Naive thymus-derived CD8-positive, alpha-beta T cell (primary cell): ENCODE measurements at regions of chr6 and their contacts with region 1.

Region 1: GRCh38 chr6:110873981-110874879 is at the start of gene AMD1:
- DNase-seq: peak; percentile 86 to 98 (median 96)
- ATAC-seq: peak; percentile 70 to 76
- H3K4me3 Mint-ChIP-seq: peak within 1 kb of the TSS; percentile 92 to 100 (median 99)
- H3K27ac Mint-ChIP-seq: peak within 1 kb of the TSS; percentile 97 to 100 (median 99)
- H3K4me1 Mint-ChIP-seq: peaks cover 13 to 33% (median 29%) of the 10 kb centered on the region in 4 donors
- H3K27me3 Mint-ChIP-seq: no peaks in the 10 kb centered on the region
- polyA plus RNA-seq, gene AMD1: 35.9 to 45.6 (median 44.7) TPM

Region 2: DNA sequence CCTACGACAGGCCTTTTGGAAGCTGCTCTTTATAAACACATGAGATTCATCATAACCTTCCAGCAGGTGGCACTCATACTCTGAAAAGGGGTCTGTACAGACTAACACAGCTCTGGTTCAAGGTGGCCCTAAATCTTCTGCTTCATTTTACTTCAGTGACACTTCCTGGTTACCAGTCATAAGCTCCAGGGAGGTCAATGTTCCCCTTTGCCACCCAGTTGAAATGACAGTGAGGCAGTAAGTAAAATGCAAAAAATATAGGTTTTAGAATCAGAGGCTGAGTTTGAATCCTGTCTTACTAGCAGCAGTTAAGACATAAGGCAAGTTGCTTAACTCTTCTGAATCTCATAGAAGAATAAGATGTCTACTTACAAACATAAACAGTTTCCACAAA is 191.8 kb before region 1 on chr6:
- POLR2A ChIA-PET with region 1: interaction called, 17 read pairs
- DNase-seq: peak in 9 of 10 donors; percentile 48 to 87 (median 73)
- ATAC-seq: peak; percentile 99
- H3K4me3 Mint-ChIP-seq: no peak overlapping the region
- H3K27ac Mint-ChIP-seq: peak overlapping the region in 5 of 10 donors; percentile 49 to 78 (median 61)
- H3K4me1 Mint-ChIP-seq: peaks cover 3 to 24% (median 12%) of the 10 kb centered on the region in 4 donors
- H3K27me3 Mint-ChIP-seq: no peaks in the 10 kb centered on the region

Region 3: GRCh38 chr6:110688661-110689268 is 185.5 kb before region 1 on chr6:
- POLR2A ChIA-PET with region 1: interaction called, 17 read pairs
- DNase-seq: peak in 1 of 10 donors; percentile 3
- ATAC-seq: peak; percentile 52 to 53
- H3K4me3 Mint-ChIP-seq: peak overlapping the region in 4 of 10 donors; percentile 19 to 41 (median 29)
- H3K27ac Mint-ChIP-seq: peak overlapping the region; percentile 24 to 90 (median 70)
- H3K4me1 Mint-ChIP-seq: peaks cover 13 to 44% (median 29%) of the 10 kb centered on the region in 4 donors
- H3K27me3 Mint-ChIP-seq: no peaks in the 10 kb centered on the region

Region 4: GRCh38 chr6:110746680-110747079 is 127.5 kb before region 1 on chr6:
- POLR2A ChIA-PET with region 1: no interaction called
- DNase-seq: no peak
- ATAC-seq: no peak
- H3K4me3 Mint-ChIP-seq: no peak overlapping the region
- H3K27ac Mint-ChIP-seq: peak overlapping the region in 1 of 10 donors; percentile 16
- H3K4me1 Mint-ChIP-seq: peaks cover 0 to 13% (median 7%) of the 10 kb centered on the region in 4 donors
- H3K27me3 Mint-ChIP-seq: no peaks in the 10 kb centered on the region

Region 5: DNA sequence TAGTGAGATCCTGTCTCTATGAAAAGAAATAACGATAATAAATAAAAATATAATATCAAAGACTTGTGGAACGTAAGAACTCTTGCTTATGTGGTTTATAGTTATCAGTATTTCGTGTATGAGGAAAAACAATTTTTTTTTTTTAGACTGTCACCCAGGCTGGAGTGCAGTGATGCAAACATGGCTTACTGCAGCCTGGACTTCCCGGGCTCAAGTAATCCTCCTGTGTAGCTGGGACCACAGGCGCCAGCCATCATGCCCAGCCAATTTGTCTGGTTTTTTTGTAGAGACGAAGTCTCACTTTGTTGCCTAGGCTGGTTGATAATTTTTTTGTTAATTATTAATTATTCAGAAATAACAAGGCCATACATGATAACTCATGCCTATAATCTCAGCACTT is 40.4 kb before region 1 on chr6:
- POLR2A ChIA-PET with region 1: no interaction called
- DNase-seq: no peak
- ATAC-seq: no peak
- H3K4me3 Mint-ChIP-seq: no peak overlapping the region
- H3K27ac Mint-ChIP-seq: no peak overlapping the region
- H3K4me1 Mint-ChIP-seq: no peaks in the 10 kb centered on the region
- H3K27me3 Mint-ChIP-seq: no peaks in the 10 kb centered on the region

Region 6: DNA sequence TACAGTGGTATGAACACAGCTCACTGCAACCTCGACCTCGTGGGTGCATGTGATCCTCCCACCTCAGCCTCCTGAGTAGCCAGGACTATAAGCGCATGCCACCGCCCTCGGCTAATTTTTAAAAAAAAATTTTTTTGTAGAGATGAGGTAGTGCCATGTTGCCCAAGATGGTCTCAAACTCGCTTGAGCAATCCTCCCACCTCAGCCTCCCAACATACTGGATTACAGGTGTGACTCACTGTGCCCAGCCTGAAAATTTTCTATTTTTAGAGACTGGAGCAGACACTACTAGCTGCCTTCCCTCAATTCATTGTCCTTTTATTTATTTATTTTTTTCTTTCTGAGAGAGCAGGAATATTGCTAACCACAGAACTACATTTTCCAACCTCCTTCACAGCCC is 63.9 kb after region 1 on chr6:
- POLR2A ChIA-PET with region 1: no interaction called
- DNase-seq: no peak
- ATAC-seq: no peak
- H3K4me3 Mint-ChIP-seq: no peak overlapping the region
- H3K27ac Mint-ChIP-seq: no peak overlapping the region
- H3K4me1 Mint-ChIP-seq: peaks cover 0 to 6% (median 0%) of the 10 kb centered on the region in 4 donors
- H3K27me3 Mint-ChIP-seq: no peaks in the 10 kb centered on the region

Region 7: GRCh38 chr6:110958329-110959192 is 84.3 kb after region 1 on chr6 and contains the start of gene GTF3C6:
- POLR2A ChIA-PET with region 1: interaction called, 87 read pairs
- DNase-seq: peak; percentile 84 to 95 (median 90)
- ATAC-seq: peak; percentile 99
- H3K4me3 Mint-ChIP-seq: peak within 1 kb of the TSS; percentile 96 to 99 (median 98)
- H3K27ac Mint-ChIP-seq: peak within 1 kb of the TSS; percentile 97 to 100 (median 98)
- H3K4me1 Mint-ChIP-seq: peaks cover 9 to 24% (median 20%) of the 10 kb centered on the region in 4 donors
- H3K27me3 Mint-ChIP-seq: peaks cover 0 to 4% (median 3%) of the 10 kb centered on the region in 5 donors
- polyA plus RNA-seq, gene GTF3C6: 93.4 to 100 (median 98.5) TPM

Region 8: GRCh38 chr6:110981202-110981600 is 107.0 kb after region 1 on chr6:
- POLR2A ChIA-PET with region 1: interaction called, 20 read pairs
- DNase-seq: peak in 1 of 10 donors; percentile 32
- ATAC-seq: no peak
- H3K4me3 Mint-ChIP-seq: peak overlapping the region; percentile 93 to 99 (median 98)
- H3K27ac Mint-ChIP-seq: peak overlapping the region; percentile 95 to 100 (median 99)
- H3K4me1 Mint-ChIP-seq: peaks cover 20 to 44% (median 43%) of the 10 kb centered on the region in 4 donors
- H3K27me3 Mint-ChIP-seq: no peaks in the 10 kb centered on the region